ENCODE measurements at regions of chr3 and their contacts with region 1.

Region 1: DNA sequence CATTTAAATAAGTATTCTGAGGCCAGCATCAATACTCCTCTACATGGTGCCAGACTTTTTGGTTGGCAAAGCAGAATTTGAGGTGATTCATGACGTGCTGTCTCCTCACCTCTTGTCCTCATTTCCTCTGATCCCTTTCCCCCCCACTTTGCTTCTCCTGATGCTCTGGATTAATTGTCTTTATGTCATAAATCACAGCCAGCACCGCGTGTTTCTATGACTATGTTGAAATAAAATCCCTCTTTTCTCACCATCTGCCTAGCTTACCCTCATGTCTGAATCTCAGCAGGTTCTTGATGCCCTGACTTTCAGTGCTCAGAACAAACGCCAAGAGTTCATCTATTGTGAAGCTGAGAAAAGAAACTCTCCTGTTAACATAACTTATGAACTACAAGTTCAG is 19.7 kb upstream of the PTPRG start:
- DNase-seq: no peak
- ATAC-seq: no peak
- H3K4me3 ChIP-seq: no peak overlapping the region
- H3K27ac ChIP-seq: no peak overlapping the region
- H3K4me1 ChIP-seq: no peaks in the 10 kb centered on the region
- H3K27me3 ChIP-seq: peaks cover 2% of the 10 kb centered on the region
- CTCF ChIP-seq: no peak
- POLR2A ChIP-seq: no peak
- RAD21 ChIP-seq: no peak

Region 2: GRCh38 chr3:60475096-60475495 is 1066.6 kb before region 1 on chr3:
- CTCF ChIA-PET with region 1: no interaction called
- POLR2A ChIA-PET with region 1: no interaction called
- dilution Hi-C with region 1: no loop called
- in situ Hi-C with region 1: no loop called
- intact Hi-C with region 1: loop called (anchors 5 kb)
- DNase-seq: no peak
- ATAC-seq: no peak
- H3K4me3 ChIP-seq: no peak overlapping the region
- H3K27ac ChIP-seq: no peak overlapping the region
- H3K4me1 ChIP-seq: no peaks in the 10 kb centered on the region
- H3K27me3 ChIP-seq: no peaks in the 10 kb centered on the region
- CTCF ChIP-seq: no peak
- POLR2A ChIP-seq: no peak
- RAD21 ChIP-seq: no peak